Adrenal gland (tissue), 19 donors: ENCODE measurements at regions of chr11 and their contacts with region 1.

Region 1: GRCh38 chr11:34174412-34175041 is 69.1 kb downstream of the NAT10 start:
- DNase-seq: peak; percentile 71 to 90 (median 86)
- H3K4me3 ChIP-seq: peak overlapping the region in 1 of 4 donors; percentile 28
- H3K27ac ChIP-seq: no peak overlapping the region
- H3K4me1 ChIP-seq: peaks cover 0 to 13% of the 10 kb centered on the region in 2 donors
- H3K27me3 ChIP-seq: no peaks in the 10 kb centered on the region
- CTCF ChIP-seq: peak; percentile 86 to 99 (median 96)
- POLR2A ChIP-seq: no peak

Region 2: DNA sequence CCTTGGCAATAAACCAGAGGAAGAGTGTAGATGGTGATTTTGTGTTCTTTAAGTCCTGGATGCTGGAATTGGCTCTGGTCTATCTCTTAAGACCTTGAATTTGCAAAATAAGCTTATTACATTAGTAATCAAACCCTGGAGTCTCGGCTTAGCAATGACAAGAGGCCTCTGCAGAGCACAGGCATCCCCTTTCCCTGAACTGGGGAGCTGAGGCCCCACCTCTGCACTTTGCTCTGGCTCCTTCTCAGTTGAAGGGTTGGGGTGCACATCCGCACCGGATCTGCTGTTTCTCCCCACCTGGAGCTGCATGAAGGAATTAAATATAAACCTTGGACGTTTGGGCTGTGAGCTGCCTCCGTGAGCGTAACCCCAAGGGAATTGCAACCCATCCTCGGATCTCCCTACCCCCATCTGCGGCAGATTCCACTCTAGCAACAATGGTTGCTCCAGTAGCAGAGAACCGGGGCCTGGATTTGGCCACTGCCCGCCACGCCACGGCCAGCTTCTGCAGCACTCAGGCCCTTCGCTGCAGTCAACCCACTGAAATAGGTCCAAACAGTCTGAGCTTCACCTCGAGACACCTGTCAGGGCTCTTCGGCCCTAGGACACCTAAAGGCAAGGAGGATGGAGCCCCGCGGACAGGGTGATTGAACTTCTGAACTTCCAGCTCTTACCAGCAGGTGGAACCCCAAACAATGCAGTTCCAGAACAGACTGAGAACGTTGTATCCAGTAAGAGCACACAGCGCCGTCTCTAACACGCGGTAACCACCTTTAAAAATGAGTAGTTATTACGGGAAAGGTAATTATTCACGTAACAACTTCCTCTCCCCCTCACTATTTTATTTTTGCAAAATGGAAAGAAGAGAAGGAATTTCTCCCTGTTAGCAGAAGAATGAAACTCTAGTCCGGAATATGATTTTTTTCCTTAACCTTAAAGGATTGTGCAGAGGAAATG is 177.8 kb before region 1 on chr11:
- intact Hi-C with region 1: loop called in 1 of 2 experiments (anchors 5 kb)
- DNase-seq: peak; percentile 59 to 88 (median 76)
- H3K4me3 ChIP-seq: no peak overlapping the region
- H3K27ac ChIP-seq: no peak overlapping the region
- H3K4me1 ChIP-seq: peaks cover 0 to 5% of the 10 kb centered on the region in 2 donors
- H3K27me3 ChIP-seq: no peaks in the 10 kb centered on the region
- CTCF ChIP-seq: peak; percentile 72 to 87 (median 78)
- POLR2A ChIP-seq: no peak

Region 3: DNA sequence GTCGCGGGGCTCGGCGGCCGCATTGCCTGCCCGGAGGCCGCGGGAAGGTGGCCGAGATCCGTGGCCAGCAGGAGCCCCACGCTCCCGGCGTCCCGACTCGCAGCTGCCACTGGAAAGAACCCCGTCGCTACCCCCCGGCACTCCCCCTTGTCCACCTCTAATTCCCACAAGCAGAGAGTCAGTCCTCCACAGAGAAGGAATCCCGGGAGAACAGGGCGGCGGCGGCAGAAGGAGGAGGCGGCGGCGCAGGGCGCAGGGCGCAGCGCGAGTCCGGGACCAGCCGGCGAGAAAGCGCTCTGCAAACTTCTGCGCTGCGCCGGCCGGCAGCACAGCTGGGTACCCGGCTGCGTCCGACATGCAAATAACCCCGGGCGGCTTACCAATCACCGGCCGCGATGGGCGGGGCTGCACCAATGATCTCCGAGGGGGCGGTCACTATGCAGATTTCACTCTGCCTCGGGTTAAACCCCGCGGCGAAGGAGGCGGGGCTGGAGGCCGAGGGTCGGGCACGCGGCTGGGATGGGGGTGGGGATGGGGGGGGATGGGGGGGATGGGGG is 183.3 kb after region 1 on chr11 and contains the start of gene ABTB2:
- intact Hi-C with region 1: loop called (anchors 2 kb)
- DNase-seq: peak; percentile 98 to 99 (median 99)
- H3K4me3 ChIP-seq: peak within 1 kb of the TSS; percentile 10 to 60 (median 38)
- H3K27ac ChIP-seq: peak within 1 kb of the TSS in 4 of 5 donors; percentile 67 to 88 (median 84)
- H3K4me1 ChIP-seq: peaks cover 10 to 39% of the 10 kb centered on the region in 2 donors
- H3K27me3 ChIP-seq: no peaks in the 10 kb centered on the region
- CTCF ChIP-seq: no peak
- POLR2A ChIP-seq: peak; percentile 91 to 98
- total RNA-seq, gene ABTB2: 3.7 to 32.3 (median 6.5) TPM

Region 4: DNA sequence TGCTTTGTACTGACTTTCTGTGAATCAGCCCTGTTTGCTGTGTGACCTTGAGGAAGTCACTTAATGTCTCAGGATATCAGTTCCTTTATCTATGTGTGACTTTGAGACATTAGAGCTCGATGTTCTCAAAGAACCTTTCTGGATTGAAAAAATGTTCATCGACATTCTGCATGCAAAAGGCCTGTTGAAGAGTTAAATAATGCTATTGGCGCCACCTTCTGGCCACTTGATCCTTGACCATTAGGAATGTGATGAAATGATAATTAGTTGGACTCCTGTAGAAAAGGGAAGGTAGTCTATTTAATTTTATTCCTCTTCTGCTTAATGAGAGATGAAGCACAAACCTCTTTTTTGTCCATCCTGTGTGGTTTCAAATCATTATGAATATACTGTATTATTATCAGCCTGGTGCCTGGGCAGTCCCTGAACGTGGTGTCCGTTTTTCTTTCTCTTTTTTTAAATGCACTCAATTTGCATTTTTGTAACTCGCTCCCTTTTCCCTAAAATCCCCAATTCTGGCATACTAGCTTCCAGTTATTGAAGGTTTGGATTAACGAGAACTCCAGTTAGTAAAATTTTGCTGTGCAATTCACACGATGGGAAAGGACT is 318.4 kb after region 1 on chr11:
- intact Hi-C with region 1: loop called (anchors 10 kb)
- DNase-seq: peak; percentile 42 to 88 (median 67)
- H3K4me3 ChIP-seq: no peak overlapping the region
- H3K27ac ChIP-seq: no peak overlapping the region
- H3K4me1 ChIP-seq: no peaks in the 10 kb centered on the region
- H3K27me3 ChIP-seq: no peaks in the 10 kb centered on the region
- CTCF ChIP-seq: peak; percentile 60 to 76 (median 70)
- POLR2A ChIP-seq: no peak